B cell (primary cell): ENCODE measurements at regions of chr17 and their contacts with region 1.

Region 1: GRCh38 chr17:37816950-37817349 is 72.1 kb upstream of the HNF1B start:
- DNase-seq: no peak
- ATAC-seq: no peak
- H3K4me3 ChIP-seq: no peak overlapping the region
- H3K4me3 Mint-ChIP-seq: no peak overlapping the region
- H3K27ac ChIP-seq: no peak overlapping the region
- H3K27ac Mint-ChIP-seq: no peak overlapping the region
- H3K4me1 ChIP-seq: peaks cover 26 to 37% of the 10 kb centered on the region in 2 donors
- H3K4me1 Mint-ChIP-seq: peaks cover 28% of the 10 kb centered on the region
- H3K27me3 ChIP-seq: peaks cover 0 to 11% (median 8%) of the 10 kb centered on the region in 4 experiments
- H3K27me3 Mint-ChIP-seq: peaks cover 21% of the 10 kb centered on the region
- CTCF ChIP-seq: no peak

Region 2: DNA sequence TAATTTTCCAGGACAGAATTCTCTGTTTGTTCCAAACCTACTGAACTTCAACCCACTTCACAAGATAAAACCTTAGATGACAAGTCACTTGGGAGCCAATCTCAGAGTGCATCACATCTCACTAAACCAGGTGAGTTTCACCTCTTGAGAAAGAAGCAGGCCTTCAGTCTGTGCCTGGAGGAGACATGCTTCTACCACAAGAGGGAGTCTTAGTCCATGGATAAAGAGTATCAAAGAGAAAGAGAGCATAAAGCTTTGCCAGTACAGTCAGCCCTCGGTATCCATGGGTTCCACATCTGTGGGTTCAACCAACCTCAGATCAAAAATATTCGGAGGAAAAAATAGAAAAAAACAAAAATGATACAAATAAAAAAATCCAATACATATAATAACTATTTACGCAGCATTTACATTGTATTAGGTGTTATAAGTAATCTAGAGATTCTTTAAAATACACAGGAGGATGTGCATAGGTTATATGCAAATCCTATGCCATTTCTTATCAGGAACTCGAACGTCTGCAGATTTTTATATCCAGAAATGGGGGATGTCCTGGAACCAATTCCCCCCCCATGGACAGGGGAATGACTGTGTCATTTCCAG is 289.6 kb before region 1 on chr17:
- CTCF ChIA-PET with region 1: interaction called, 22 read pairs
- POLR2A ChIA-PET with region 1: no interaction called
- intact Hi-C with region 1: no loop called
- DNase-seq: peak; percentile 46
- ATAC-seq: no peak
- H3K4me3 ChIP-seq: no peak overlapping the region
- H3K4me3 Mint-ChIP-seq: no peak overlapping the region
- H3K27ac ChIP-seq: no peak overlapping the region
- H3K27ac Mint-ChIP-seq: no peak overlapping the region
- H3K4me1 ChIP-seq: no peaks in the 10 kb centered on the region
- H3K4me1 Mint-ChIP-seq: no peaks in the 10 kb centered on the region
- H3K27me3 ChIP-seq: no peaks in the 10 kb centered on the region
- H3K27me3 Mint-ChIP-seq: no peaks in the 10 kb centered on the region
- CTCF ChIP-seq: peak; percentile 66

Region 3: DNA sequence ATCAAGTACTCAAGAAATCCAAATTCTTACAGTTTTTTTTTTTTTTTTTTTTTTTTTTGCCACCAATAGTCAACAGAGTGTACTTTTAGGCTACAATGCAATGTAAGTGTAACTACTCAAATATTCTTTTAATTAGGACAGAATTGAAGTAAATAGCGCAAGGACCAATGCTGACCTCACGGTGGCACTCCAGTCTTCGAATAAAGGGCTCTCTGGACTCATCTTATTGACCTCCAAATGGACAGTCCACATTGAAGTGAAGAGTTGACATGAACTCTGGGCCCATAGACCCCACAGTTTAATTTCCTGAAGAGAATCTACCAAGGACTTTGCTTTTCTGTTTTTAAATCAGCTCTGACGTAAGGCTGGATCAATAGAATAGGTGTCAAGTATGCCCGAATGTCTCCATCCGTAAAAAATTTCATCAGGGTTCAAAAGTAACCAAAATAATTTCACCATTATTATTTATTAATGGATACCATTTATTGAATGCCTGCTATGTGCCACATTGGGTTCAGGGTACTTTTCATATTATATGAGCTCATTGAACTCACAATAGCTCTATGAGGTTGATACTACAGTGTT is 166.4 kb before region 1 on chr17:
- CTCF ChIA-PET with region 1: interaction called, 10 read pairs
- POLR2A ChIA-PET with region 1: no interaction called
- intact Hi-C with region 1: no loop called
- DNase-seq: no peak
- ATAC-seq: no peak
- H3K4me3 ChIP-seq: no peak overlapping the region
- H3K4me3 Mint-ChIP-seq: no peak overlapping the region
- H3K27ac ChIP-seq: no peak overlapping the region
- H3K27ac Mint-ChIP-seq: no peak overlapping the region
- H3K4me1 ChIP-seq: no peaks in the 10 kb centered on the region
- H3K4me1 Mint-ChIP-seq: no peaks in the 10 kb centered on the region
- H3K27me3 ChIP-seq: peaks cover 0 to 38% (median 14%) of the 10 kb centered on the region in 4 experiments
- H3K27me3 Mint-ChIP-seq: peaks cover 57% of the 10 kb centered on the region
- CTCF ChIP-seq: no peak